CD4-positive, alpha-beta T cell (primary cell): ENCODE measurements at regions of chr7 and their contacts with region 1.

Region 1: DNA sequence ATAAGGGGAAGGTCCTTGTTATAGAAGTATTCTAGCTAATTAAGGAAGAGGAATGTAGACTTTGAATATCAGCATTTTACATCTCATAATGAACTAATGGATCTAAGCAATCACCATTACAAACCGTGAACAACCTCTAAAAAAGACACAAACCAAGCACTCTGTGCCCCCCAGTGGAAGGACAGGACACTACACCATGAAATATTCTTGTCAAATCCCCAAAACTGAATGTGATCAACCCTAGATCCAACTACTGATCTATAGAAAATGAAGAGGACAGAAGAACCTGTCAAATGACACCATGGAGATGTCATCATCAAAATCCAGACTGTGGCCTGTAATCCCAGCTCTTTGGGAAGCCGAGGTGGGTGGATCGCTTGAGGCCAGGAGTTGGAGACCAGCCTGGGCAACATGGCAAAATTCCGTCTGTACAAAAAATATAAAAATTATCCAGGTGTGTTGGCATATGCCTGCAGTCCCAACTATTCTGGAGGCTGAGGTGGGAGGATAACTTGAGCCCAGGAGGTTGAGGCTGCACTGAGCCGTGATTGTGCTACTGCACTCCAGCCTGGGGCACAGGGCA is 111.3 kb upstream of the CARD11 start:
- DNase-seq: peak; percentile 30 to 81 (median 51)
- ATAC-seq: peak; percentile 87
- H3K4me3 ChIP-seq: no peak overlapping the region
- H3K4me3 Mint-ChIP-seq: no peak overlapping the region
- H3K27ac ChIP-seq: no peak overlapping the region
- H3K27ac Mint-ChIP-seq: no peak overlapping the region
- H3K4me1 ChIP-seq: no peaks in the 10 kb centered on the region
- H3K4me1 Mint-ChIP-seq: peaks cover 12% of the 10 kb centered on the region
- H3K27me3 ChIP-seq: no peaks in the 10 kb centered on the region
- H3K27me3 Mint-ChIP-seq: no peaks in the 10 kb centered on the region
- CTCF ChIP-seq: peak; percentile 81

Region 2: GRCh38 chr7:2451171-2452073 is 703.6 kb before region 1 on chr7:
- CTCF ChIA-PET with region 1: no interaction called
- POLR2A ChIA-PET with region 1: no interaction called
- intact Hi-C with region 1: loop called in 1 of 2 experiments (anchors 10 kb)
- DNase-seq: peak; percentile 61 to 87 (median 72)
- ATAC-seq: peak; percentile 95
- H3K4me3 ChIP-seq: peak overlapping the region; percentile 46
- H3K4me3 Mint-ChIP-seq: no peak overlapping the region
- H3K27ac ChIP-seq: no peak overlapping the region
- H3K27ac Mint-ChIP-seq: no peak overlapping the region
- H3K4me1 ChIP-seq: peaks cover 12% of the 10 kb centered on the region
- H3K4me1 Mint-ChIP-seq: no peaks in the 10 kb centered on the region
- H3K27me3 ChIP-seq: peaks cover 0 to 9% of the 10 kb centered on the region in 2 experiments
- H3K27me3 Mint-ChIP-seq: no peaks in the 10 kb centered on the region
- CTCF ChIP-seq: peak; percentile 83

Region 3: DNA sequence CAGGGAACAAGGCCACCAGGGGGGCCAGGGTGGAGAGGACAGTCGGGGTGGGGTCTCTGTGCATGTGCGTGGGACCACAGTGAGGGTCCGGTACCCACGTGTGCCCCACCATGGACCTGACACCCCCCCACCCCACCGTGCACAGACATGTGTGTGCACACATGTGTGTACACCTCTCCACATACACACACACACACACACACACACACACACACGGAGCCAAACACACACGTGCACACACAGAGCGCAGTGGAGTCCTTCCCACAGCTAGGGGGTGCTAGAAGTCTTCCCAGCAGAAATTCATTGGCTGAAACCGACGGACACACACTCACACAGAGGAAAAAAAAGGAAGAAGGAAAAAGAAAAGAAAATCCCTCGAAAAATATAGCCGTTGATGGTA is 268.1 kb before region 1 on chr7:
- CTCF ChIA-PET with region 1: interaction called, 3 read pairs
- POLR2A ChIA-PET with region 1: no interaction called
- intact Hi-C with region 1: loop called (anchors 1 kb)
- DNase-seq: peak in 13 of 14 experiments; percentile 23 to 82 (median 37)
- ATAC-seq: peak; percentile 70
- H3K4me3 ChIP-seq: no peak overlapping the region
- H3K4me3 Mint-ChIP-seq: peak overlapping the region; percentile 16
- H3K27ac ChIP-seq: no peak overlapping the region
- H3K27ac Mint-ChIP-seq: no peak overlapping the region
- H3K4me1 ChIP-seq: peaks cover 6% of the 10 kb centered on the region
- H3K4me1 Mint-ChIP-seq: peaks cover 5% of the 10 kb centered on the region
- H3K27me3 ChIP-seq: no peaks in the 10 kb centered on the region
- H3K27me3 Mint-ChIP-seq: no peaks in the 10 kb centered on the region
- CTCF ChIP-seq: peak; percentile 63

Region 4: GRCh38 chr7:2982831-2983230 is 172.2 kb before region 1 on chr7:
- CTCF ChIA-PET with region 1: no interaction called
- POLR2A ChIA-PET with region 1: no interaction called
- intact Hi-C with region 1: loop called in 1 of 2 experiments (anchors 1 kb)
- DNase-seq: peak; percentile 37 to 80 (median 56)
- ATAC-seq: peak; percentile 84
- H3K4me3 ChIP-seq: no peak overlapping the region
- H3K4me3 Mint-ChIP-seq: peak overlapping the region; percentile 77
- H3K27ac ChIP-seq: peak overlapping the region in 1 of 2 donors; percentile 50
- H3K27ac Mint-ChIP-seq: peak overlapping the region; percentile 87
- H3K4me1 ChIP-seq: peaks cover 79% of the 10 kb centered on the region
- H3K4me1 Mint-ChIP-seq: peaks cover 90% of the 10 kb centered on the region
- H3K27me3 ChIP-seq: no peaks in the 10 kb centered on the region
- H3K27me3 Mint-ChIP-seq: no peaks in the 10 kb centered on the region
- CTCF ChIP-seq: no peak

Region 5: DNA sequence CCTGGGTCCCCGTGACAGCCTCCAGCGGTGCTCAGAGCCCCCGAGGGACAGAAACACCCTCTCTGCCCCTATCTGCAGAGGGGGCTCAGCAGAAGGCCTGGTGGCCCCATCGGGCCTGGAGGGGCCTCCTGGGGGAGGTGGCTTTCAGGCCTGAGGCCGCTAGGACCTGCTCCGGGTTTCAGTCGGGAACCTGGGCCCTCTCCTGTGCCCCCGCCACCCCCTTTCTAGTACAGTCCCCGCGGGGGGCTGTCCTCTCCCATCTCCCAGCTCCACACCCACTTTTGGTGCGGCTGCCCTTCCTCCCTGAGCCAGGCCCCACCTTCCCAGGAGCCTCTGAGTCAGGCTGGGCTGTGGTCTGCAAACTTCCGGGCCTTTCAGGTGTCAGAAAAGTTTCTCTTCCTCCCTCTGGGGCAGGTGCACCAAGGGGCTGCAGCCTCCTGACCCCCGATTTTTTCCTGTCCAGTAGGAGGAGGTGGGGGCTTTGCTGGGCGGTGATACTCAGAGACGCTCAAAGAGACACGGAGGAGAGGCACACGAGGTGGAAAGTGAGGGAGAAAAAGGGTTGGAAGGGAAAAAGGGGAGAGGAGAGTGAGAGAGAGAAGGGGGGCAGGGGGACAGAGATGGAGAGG is 112.0 kb before region 1 on chr7:
- CTCF ChIA-PET with region 1: interaction called, 3 read pairs
- POLR2A ChIA-PET with region 1: no interaction called
- intact Hi-C with region 1: loop called in 1 of 2 experiments (anchors 2 kb)
- DNase-seq: peak; percentile 23 to 86 (median 66)
- ATAC-seq: peak; percentile 75
- H3K4me3 ChIP-seq: peak overlapping the region; percentile 89
- H3K4me3 Mint-ChIP-seq: peak overlapping the region; percentile 93
- H3K27ac ChIP-seq: peak overlapping the region; percentile 74 to 99
- H3K27ac Mint-ChIP-seq: peak overlapping the region; percentile 85
- H3K4me1 ChIP-seq: peaks cover 60% of the 10 kb centered on the region
- H3K4me1 Mint-ChIP-seq: peaks cover 70% of the 10 kb centered on the region
- H3K27me3 ChIP-seq: no peaks in the 10 kb centered on the region
- H3K27me3 Mint-ChIP-seq: no peaks in the 10 kb centered on the region
- CTCF ChIP-seq: no peak